ENCODE measurements at regions of chr7 and their contacts with region 1.

Region 1: DNA sequence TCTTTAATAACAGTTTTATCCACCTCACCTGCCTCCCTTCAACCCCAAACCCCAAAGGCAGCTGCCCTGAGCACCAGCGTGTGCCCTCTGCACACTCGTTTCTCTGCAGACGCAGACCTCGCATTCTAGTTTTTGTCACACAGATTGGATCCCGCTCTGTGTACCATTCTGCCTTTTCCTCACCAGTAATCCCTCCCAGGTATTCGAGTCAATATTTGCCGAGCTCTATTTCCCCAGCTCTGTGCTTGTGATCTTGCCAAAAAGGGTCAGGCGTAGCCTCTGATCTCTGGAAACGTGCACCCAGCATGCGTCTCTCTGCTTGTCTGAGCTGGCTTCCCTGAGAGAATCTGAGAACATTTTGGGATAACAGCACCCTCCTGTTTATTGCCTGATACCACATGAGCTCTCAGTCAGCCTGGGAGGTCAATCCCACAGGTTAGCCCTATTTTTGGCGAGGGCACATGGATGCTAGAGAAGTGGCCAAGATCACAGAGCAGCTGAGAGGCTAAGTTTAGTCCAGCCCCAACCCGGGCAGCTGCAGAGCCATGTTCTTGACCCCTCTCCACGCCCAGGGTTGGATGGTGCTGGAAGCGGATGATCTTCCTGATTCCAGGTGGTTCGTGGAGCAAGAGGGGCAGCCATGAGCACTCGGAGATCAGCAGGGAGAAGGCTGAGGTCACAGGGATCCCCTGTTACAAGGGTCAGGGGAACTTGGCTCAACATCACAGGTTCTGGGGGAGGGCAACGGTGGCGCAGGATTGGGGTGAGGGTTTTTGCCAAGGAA is 29.1 kb downstream of the FOXL3 start:
- DNase-seq: peak; percentile 42 to 76 (median 69)
- ATAC-seq: peak; percentile 14
- H3K4me3 ChIP-seq: no peak overlapping the region
- H3K27ac ChIP-seq: peak overlapping the region in 3 of 4 donors; percentile 1 to 39 (median 2)
- H3K4me1 ChIP-seq: peaks cover 45% of the 10 kb centered on the region
- H3K27me3 ChIP-seq: no peaks in the 10 kb centered on the region
- CTCF ChIP-seq: no peak
- POLR2A ChIP-seq: peak in 1 of 3 donors; percentile 21

Region 2: GRCh38 chr7:379456-380138 is 60.5 kb after region 1 on chr7:
- intact Hi-C with region 1: no loop called
- DNase-seq: peak in 1 of 4 donors; percentile 17
- ATAC-seq: no peak
- H3K4me3 ChIP-seq: no peak overlapping the region
- H3K27ac ChIP-seq: no peak overlapping the region
- H3K4me1 ChIP-seq: peaks cover under 1% of the 10 kb centered on the region
- H3K27me3 ChIP-seq: no peaks in the 10 kb centered on the region
- CTCF ChIP-seq: no peak
- POLR2A ChIP-seq: no peak

Region 3: GRCh38 chr7:732094-732541 is 413.0 kb after region 1 on chr7:
- intact Hi-C with region 1: loop called (anchors 5 kb)
- DNase-seq: peak; percentile 60 to 88 (median 85)
- ATAC-seq: peak; percentile 83
- H3K4me3 ChIP-seq: no peak overlapping the region
- H3K27ac ChIP-seq: peak overlapping the region; percentile 1 to 64 (median 18)
- H3K4me1 ChIP-seq: peaks cover 23% of the 10 kb centered on the region
- H3K27me3 ChIP-seq: no peaks in the 10 kb centered on the region
- CTCF ChIP-seq: peak in 5 of 7 experiments; percentile 36 to 74 (median 57)
- POLR2A ChIP-seq: no peak

Region 4: DNA sequence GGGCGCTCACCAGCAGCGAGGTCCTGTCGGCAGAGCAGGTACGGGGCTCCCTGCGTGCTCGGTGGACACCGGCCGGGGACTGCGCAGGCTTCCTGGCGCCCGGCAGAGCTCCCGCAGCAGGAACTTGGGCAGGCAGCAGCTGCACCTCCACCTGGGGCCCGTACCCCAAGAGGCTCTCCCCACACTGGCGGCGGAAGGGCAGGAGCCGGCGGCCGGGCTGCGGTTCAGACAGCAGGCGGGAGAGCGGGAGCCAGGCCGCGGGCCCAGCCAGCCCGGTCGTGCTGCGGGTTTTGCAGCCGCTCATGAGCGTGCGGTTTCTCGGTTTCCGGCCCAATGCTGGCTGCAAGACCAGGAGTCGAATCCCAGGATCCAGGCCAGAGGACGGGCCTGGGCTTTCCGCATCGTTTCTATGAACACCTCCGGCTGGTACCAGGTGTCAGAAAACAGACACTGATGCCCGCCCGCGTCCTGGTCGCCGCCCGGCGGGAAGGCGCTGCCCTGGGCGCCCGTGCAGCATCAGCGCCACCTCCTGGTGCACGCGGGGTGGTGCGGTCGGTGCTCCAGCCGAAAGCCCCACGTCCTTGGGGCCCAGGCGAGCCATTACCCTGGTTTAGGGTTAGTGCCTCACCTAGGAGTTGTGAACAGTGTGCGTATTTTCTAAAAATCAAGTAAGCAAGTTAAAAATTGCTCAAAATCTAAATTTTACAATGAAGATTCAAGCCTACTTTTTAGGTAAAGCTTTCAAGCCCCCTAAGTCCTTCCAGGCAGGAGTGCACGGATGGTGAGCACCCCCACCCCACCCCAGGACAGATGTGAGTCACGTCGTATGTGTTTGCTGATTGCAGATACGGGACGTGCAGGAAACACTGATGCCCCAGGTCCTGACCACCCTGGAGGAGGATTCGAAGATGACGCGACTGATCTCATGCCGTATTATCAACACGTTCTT is 455.4 kb after region 1 on chr7:
- intact Hi-C with region 1: loop called (anchors 5 kb)
- DNase-seq: peak; percentile 55 to 72 (median 60)
- ATAC-seq: peak; percentile 43
- H3K4me3 ChIP-seq: no peak overlapping the region
- H3K27ac ChIP-seq: no peak overlapping the region
- H3K4me1 ChIP-seq: peaks cover 29% of the 10 kb centered on the region
- H3K27me3 ChIP-seq: no peaks in the 10 kb centered on the region
- CTCF ChIP-seq: peak; percentile 69 to 90 (median 82)
- POLR2A ChIP-seq: no peak